Body of pancreas (tissue), 4 donors: ENCODE measurements at regions of chr7 and their contacts with region 1.

Region 1: GRCh38 chr7:51162724-51163329 is 153.8 kb downstream of the COBL start:
- DNase-seq: peak; percentile 81 to 86 (median 84)
- ATAC-seq: peak; percentile 84
- H3K4me3 ChIP-seq: no peak overlapping the region
- H3K27ac ChIP-seq: no peak overlapping the region
- H3K4me1 ChIP-seq: no peaks in the 10 kb centered on the region
- H3K27me3 ChIP-seq: no peaks in the 10 kb centered on the region
- CTCF ChIP-seq: peak; percentile 58 to 90 (median 79)
- POLR2A ChIP-seq: no peak

Region 2: GRCh38 chr7:50206453-50207250 is 956.2 kb before region 1 on chr7:
- intact Hi-C with region 1: loop called (anchors 10 kb)
- DNase-seq: peak in 1 of 4 donors; percentile 55
- ATAC-seq: no peak
- H3K4me3 ChIP-seq: no peak overlapping the region
- H3K27ac ChIP-seq: no peak overlapping the region
- H3K4me1 ChIP-seq: no peaks in the 10 kb centered on the region
- H3K27me3 ChIP-seq: no peaks in the 10 kb centered on the region
- CTCF ChIP-seq: no peak
- POLR2A ChIP-seq: no peak

Region 3: GRCh38 chr7:50436133-50436806 is 726.6 kb before region 1 on chr7:
- intact Hi-C with region 1: no loop called
- DNase-seq: no peak
- ATAC-seq: no peak
- H3K4me3 ChIP-seq: no peak overlapping the region
- H3K27ac ChIP-seq: no peak overlapping the region
- H3K4me1 ChIP-seq: no peaks in the 10 kb centered on the region
- H3K27me3 ChIP-seq: no peaks in the 10 kb centered on the region
- CTCF ChIP-seq: no peak
- POLR2A ChIP-seq: no peak

Region 4: DNA sequence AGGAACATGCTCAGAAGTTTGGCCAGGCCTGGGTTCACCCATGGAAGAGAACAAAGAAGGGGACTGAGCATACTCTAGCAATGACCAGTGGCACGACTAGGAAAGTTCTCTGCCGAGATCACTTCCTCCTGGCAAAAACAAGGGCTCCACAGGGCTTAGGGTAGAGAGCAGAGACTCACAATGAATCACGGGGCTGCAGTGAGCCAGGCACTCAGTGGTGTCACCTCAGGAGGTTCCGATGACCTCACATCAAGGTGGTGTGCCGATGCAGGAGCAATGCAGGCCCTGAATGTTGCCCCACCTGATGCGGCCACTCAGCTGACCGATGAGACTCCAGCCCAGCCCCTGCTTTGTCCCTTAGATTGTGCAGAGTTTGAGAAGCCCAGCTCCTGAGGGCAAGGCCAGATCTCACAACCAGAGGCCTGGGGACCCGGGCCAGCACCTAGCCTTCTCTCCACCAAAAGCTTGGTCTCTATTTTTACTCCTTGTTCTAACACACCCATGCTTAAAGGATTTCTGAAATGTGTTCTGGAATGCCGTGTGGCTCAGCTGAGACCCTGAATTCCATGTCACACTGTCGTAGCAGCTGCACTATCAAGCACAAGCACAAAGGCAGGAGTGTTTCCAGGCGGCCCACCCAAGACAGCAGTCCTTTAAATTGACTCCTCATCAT is 92.8 kb after region 1 on chr7:
- intact Hi-C with region 1: no loop called
- DNase-seq: no peak
- ATAC-seq: peak; percentile 67
- H3K4me3 ChIP-seq: no peak overlapping the region
- H3K27ac ChIP-seq: peak overlapping the region in 3 of 4 donors; percentile 22 to 52 (median 39)
- H3K4me1 ChIP-seq: peaks cover 8% of the 10 kb centered on the region
- H3K27me3 ChIP-seq: no peaks in the 10 kb centered on the region
- CTCF ChIP-seq: no peak
- POLR2A ChIP-seq: no peak